ENCODE measurements at regions of chr22 and their contacts with region 1.

Region 1: DNA sequence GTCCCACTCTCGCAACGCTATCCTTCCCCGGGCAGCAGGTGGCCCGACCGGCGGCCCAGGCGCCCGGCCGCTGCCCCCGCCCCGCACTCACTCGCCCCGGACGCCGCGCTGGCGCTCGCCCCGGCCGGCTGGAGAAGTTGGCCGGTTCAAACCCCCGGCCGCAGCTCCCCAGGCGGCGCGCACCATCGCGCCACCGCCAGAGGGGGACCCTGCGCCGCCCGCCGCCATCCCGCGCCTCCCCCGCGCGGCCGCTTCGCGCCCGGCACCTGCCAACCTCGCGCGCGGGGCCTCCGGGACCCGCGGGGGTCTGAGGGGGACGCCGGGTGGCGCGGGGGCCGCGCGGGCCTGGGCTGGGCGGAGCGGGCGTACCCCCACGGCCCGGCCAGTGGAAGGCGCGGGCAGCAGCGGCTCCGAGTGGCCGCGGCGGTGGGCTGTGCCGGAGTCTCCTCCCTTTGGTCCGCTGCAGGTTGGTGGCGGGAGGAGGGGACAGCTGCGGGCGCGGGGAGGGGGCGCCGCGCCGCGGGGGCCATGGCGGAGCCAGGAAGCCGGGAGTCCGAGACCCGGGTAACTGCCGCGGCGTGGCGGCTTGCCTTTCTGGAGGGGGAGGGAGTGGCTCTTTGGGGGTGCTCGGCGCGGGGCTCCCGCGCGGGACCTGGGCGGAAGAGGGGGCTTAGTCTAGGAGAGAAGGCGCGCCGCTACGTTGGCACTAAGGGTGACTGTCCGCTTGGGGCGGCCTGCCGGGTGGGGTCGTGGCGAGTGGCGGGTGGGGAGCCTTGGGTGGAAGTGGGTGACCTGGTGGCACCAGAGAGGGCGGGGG is at the starts of genes MPST and TST:
- DNase-seq: peak; percentile 97
- H3K4me3 ChIP-seq: peak within 1 kb of the TSS; percentile 92 to 94
- H3K27ac ChIP-seq: peak within 1 kb of the TSS; percentile 42 to 89
- H3K4me1 ChIP-seq: peaks cover 12 to 28% of the 10 kb centered on the region in 2 experiments; a peak in 2 of 4 replicates
- H3K27me3 ChIP-seq: no peaks in the 10 kb centered on the region
- CTCF ChIP-seq: 0 out of 2 replicates have a peak, but pooled peaks have one; percentile 18
- EP300 ChIP-seq: no peak
- RAD21 ChIP-seq: no peak
- polyA plus RNA-seq, gene MPST: 45.0 and 60.4 TPM in 2 replicates
- polyA plus RNA-seq, gene TST: 47.6 and 49.4 TPM in 2 replicates

Region 2: DNA sequence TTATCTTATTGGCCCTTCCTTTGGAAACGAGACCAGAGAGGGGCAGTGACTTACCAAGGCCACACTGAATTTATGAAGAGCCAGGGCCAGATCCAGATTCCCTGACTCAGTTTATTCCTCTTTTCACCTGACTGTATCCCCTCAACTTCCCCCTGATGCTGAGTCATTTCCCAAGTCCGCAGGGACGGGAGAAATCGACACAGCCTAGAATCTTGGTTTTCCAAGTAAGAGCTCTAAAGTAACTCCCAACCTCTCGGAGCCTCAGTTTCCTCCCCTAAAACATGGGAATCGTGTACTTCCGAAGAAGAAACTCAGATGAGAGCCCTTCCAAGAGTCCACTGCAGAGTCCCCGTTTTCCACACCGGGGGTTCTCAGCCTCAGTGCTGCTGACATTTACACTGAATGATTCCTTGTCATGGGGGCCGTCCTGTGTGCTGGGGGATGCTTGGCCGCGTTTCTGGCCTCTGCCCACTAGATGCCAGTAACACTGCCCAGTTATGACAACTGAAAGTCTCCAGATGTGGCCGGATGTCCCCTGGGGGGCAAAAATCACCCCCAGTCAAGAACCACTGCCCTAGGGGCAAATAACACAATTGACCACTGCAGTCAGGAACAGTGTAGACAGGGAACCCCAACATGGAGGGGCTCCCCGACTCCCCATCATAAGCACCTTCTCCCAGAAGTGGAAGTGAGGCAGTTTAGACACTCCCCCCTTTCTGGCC is 11.2 kb after region 1 on chr22:
- CTCF ChIA-PET with region 1: interaction called, 17 read pairs
- POLR2A ChIA-PET with region 1: interaction called, 5 read pairs
- DNase-seq: peak; percentile 54
- H3K4me3 ChIP-seq: no peak overlapping the region
- H3K27ac ChIP-seq: no peak overlapping the region
- H3K4me1 ChIP-seq: no peaks in the 10 kb centered on the region; a peak in 1 of 4 replicates
- H3K27me3 ChIP-seq: no peaks in the 10 kb centered on the region
- CTCF ChIP-seq: peak; percentile 27; the same call in 1 of the 2 replicates
- EP300 ChIP-seq: no peak
- RAD21 ChIP-seq: no peak

Region 3: DNA sequence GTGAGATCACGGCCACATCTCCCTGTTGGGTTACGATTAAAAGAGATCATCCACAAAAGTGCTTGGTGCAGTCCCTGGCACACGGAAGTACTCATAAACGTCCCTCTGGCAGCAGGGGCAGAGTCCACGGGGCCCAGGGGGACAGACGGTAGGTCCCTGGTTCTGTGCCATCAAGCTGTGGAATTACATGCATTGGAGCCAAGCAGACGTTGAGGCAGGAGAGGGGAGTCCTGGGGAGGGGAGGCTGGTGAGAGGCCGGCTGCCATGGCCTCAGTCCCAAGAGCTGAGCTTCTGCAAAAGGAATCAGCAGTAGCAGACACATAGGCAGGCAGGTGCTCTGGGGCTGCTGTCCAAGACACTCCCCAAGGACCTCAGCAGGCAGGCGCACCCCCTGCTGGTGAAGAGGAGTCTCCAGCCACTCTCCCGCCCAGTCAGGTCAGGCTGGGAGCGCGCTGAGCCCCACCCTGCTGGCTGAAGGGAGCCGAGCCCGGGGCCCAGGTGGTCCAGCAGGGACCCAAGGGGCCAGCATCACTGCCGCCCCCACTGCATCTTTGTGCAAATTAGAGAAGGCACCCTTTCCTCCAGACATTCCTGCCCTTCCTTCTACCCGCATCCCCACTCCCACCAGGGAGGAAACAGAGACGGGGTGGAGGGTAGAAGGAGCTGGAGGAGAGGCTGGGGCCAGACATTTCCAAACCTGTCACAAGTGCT is 24.5 kb after region 1 on chr22:
- CTCF ChIA-PET with region 1: interaction called, 18 read pairs
- POLR2A ChIA-PET with region 1: no interaction called
- DNase-seq: peak; percentile 70
- H3K4me3 ChIP-seq: no peak overlapping the region
- H3K27ac ChIP-seq: no peak overlapping the region
- H3K4me1 ChIP-seq: peaks cover 0 to 14% of the 10 kb centered on the region in 2 experiments; a peak in 1 of 4 replicates
- H3K27me3 ChIP-seq: no peaks in the 10 kb centered on the region
- CTCF ChIP-seq: peak; percentile 46
- EP300 ChIP-seq: no peak
- RAD21 ChIP-seq: no peak